Aorta (tissue), 5 donors: ENCODE measurements at regions of chr2 and their contacts with region 1.

Region 1: GRCh38 chr2:44136186-44136585 is 32.5 kb upstream of the PPM1B start:
- DNase-seq: no peak
- ATAC-seq: no peak
- H3K4me3 ChIP-seq: no peak overlapping the region
- H3K27ac ChIP-seq: peak overlapping the region; percentile 57 to 95
- H3K4me1 ChIP-seq: peaks cover 4 to 12% of the 10 kb centered on the region in 2 donors
- H3K27me3 ChIP-seq: no peaks in the 10 kb centered on the region

Region 2: GRCh38 chr2:43724728-43725526 is 411.3 kb before region 1 on chr2:
- intact Hi-C with region 1: no loop called
- DNase-seq: no peak
- ATAC-seq: no peak
- H3K4me3 ChIP-seq: no peak overlapping the region
- H3K27ac ChIP-seq: no peak overlapping the region
- H3K4me1 ChIP-seq: no peaks in the 10 kb centered on the region
- H3K27me3 ChIP-seq: no peaks in the 10 kb centered on the region

Region 3: DNA sequence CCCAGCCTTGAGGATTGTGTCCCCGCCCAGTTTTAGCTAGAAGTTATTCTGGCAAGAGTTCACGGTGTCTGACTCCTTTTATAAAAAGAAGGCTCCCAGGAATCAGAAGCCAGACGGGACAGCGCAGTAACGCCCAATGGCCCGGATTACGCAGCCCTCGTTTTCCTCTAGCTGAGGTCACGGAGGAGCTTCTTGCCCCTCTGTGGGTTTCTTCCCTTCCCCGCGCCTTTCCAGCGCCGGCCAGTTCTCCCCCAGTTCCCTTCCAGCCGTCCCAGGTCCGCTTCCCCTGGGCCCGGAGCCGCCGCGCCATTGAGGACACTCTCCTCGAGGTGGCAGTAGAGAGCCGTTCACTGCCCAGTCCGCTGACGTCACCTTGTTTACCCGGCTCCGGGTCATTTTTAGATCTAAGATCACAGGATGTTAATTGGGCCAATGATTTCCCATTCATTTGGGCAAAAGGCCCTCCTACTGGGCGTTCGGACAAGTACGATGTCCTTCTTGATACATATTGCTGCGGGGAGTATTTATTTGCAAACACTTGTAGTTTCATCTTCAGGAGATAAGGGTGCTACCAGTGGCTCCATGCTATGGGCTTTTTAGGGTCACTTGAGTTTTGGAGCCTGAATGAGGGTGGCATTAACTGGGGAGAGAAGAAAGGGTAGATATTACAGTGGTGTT is 49.0 kb before region 1 on chr2:
- intact Hi-C with region 1: loop called in 1 of 2 experiments (anchors 5 kb)
- DNase-seq: peak; percentile 91 to 95
- ATAC-seq: peak; percentile 98
- H3K4me3 ChIP-seq: peak overlapping the region in 1 of 2 donors; percentile 42
- H3K27ac ChIP-seq: peak overlapping the region; percentile 4 to 17
- H3K4me1 ChIP-seq: no peaks in the 10 kb centered on the region
- H3K27me3 ChIP-seq: no peaks in the 10 kb centered on the region

Region 4: DNA sequence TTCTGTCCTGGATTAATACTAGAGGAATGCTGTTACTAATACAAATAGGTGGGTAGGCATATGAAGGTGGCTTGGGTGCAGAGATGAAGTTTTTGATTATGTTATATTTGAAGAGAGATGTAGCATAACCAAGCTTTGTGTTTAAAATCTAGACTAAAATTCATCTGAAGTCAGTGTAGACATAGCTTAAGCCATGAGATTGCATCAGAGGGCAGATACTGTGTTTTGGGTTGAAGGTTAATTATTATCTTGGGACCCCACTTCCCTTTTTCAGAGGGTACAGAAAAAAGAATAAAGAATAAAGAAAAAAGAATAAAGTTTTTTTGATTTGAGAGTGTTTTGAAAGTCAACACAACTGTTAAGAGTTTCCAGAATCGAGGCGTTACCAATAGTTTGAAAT is 45.5 kb after region 1 on chr2:
- intact Hi-C with region 1: no loop called
- DNase-seq: no peak
- ATAC-seq: no peak
- H3K4me3 ChIP-seq: no peak overlapping the region
- H3K27ac ChIP-seq: no peak overlapping the region
- H3K4me1 ChIP-seq: peaks cover 6 to 7% of the 10 kb centered on the region in 2 donors
- H3K27me3 ChIP-seq: no peaks in the 10 kb centered on the region